CD4-positive, alpha-beta memory T cell (primary cell): ENCODE measurements at regions of chr12 and their contacts with region 1.

Region 1: DNA sequence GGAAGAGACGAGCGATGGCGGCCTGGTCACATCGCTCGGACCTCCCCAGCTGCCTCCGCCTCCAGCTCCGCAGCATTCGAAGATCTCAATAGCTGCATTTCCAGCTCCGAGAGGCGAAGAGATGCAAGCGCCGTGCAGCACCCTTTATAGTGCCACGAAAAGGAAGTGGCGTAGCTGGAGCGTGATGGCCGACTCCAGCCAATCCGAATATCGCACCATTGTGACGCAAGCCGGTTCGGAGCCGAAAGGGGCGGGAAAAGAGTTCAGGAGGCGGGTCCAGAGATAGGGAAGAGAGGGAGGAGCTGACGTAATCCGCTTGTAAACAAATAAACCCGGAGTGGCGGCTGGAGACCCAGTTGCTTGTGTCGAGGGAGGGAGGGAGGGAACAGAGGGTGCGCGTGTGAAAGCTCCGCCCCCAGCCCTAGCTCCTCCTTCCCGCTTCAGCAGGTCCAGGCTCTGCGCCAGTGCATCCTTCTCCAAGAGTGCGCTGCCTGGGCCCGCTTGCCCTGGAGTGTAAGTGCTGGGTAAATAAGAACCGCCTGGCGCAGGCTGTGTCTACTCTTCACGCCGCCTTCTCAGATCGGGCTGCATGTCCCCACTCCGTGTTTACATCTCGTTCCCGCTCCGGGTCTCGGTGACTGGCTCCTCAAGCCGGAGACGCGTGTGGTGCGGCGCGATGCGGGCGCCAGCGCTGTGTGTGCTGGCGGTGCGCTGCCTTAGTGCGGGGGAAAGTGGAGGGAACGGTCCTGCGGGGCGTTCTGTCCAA is at the start of gene BTG1:
- DNase-seq: peak; percentile 99 to 100 (median 100)
- H3K4me3 ChIP-seq: peak within 1 kb of the TSS; percentile 89 to 96
- H3K4me3 Mint-ChIP-seq: peak within 1 kb of the TSS; percentile 92 to 100 (median 100)
- H3K27ac ChIP-seq: peak within 1 kb of the TSS; percentile 86
- H3K27ac Mint-ChIP-seq: peak within 1 kb of the TSS; percentile 95 to 100 (median 100)
- H3K4me1 ChIP-seq: peaks cover 23% of the 10 kb centered on the region
- H3K4me1 Mint-ChIP-seq: peaks cover 9 to 37% (median 21%) of the 10 kb centered on the region in 4 donors
- H3K27me3 ChIP-seq: no peaks in the 10 kb centered on the region
- H3K27me3 Mint-ChIP-seq: no peaks in the 10 kb centered on the region
- total RNA-seq, gene BTG1: 431 to 469 TPM

Region 2: GRCh38 chr12:91866566-91866965 is 279.3 kb before region 1 on chr12:
- CTCF ChIA-PET with region 1: interaction called, 3 read pairs
- POLR2A ChIA-PET with region 1: interaction called, 33 read pairs
- intact Hi-C with region 1: no loop called
- DNase-seq: no peak
- H3K4me3 ChIP-seq: no peak overlapping the region
- H3K4me3 Mint-ChIP-seq: no peak overlapping the region
- H3K27ac ChIP-seq: no peak overlapping the region
- H3K27ac Mint-ChIP-seq: peak overlapping the region in 1 of 7 donors; percentile 30
- H3K4me1 ChIP-seq: peaks cover 21% of the 10 kb centered on the region
- H3K4me1 Mint-ChIP-seq: peaks cover 19 to 47% (median 33%) of the 10 kb centered on the region in 4 donors
- H3K27me3 ChIP-seq: no peaks in the 10 kb centered on the region
- H3K27me3 Mint-ChIP-seq: no peaks in the 10 kb centered on the region

Region 3: DNA sequence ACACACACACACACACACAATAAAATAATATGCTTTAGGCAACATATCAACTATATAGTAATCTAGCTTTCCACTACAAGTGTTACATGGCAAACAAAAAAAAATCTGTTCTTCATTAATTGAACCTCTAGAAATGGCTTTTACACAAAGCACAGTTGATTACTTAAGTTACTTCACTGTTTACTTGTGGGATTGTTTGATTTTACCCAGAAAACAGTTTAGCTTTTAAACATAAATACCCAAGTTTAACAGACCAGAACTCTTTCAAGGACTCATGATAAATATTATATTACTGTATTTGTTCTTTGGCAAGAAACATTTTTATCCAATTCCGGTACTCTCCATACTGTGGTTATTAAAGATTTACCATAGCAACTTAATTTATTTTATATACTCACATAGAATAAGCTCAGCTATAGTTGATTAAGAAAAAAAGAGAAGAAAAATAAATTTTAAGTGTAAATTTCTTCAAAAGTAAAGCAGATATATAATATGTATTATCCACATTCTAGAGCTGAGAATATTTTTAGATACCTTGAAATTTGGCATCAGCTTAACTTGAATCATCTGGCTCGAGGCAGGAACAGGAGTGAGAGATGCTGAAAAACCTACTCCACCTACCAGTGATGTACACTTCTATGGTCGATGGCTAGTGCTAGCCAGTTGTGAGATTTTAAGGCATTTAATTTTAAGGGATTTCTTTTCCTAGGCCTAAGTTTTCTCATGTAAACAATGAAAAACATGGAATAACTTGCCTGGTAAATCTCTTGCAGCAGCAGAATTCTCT is 126.2 kb before region 1 on chr12:
- CTCF ChIA-PET with region 1: no interaction called
- POLR2A ChIA-PET with region 1: interaction called, 12 read pairs
- intact Hi-C with region 1: no loop called
- DNase-seq: no peak
- H3K4me3 ChIP-seq: no peak overlapping the region
- H3K4me3 Mint-ChIP-seq: no peak overlapping the region
- H3K27ac ChIP-seq: no peak overlapping the region
- H3K27ac Mint-ChIP-seq: peak overlapping the region in 1 of 7 donors; percentile 74
- H3K4me1 ChIP-seq: peaks cover 14% of the 10 kb centered on the region
- H3K4me1 Mint-ChIP-seq: peaks cover 12 to 16% (median 13%) of the 10 kb centered on the region in 4 donors
- H3K27me3 ChIP-seq: no peaks in the 10 kb centered on the region
- H3K27me3 Mint-ChIP-seq: no peaks in the 10 kb centered on the region

Region 4: GRCh38 chr12:92108651-92109050 is 37.3 kb before region 1 on chr12:
- CTCF ChIA-PET with region 1: no interaction called
- POLR2A ChIA-PET with region 1: interaction called, 19 read pairs
- intact Hi-C with region 1: no loop called
- DNase-seq: no peak
- H3K4me3 ChIP-seq: no peak overlapping the region
- H3K4me3 Mint-ChIP-seq: peak overlapping the region in 1 of 8 donors; percentile 42
- H3K27ac ChIP-seq: no peak overlapping the region
- H3K27ac Mint-ChIP-seq: peak overlapping the region in 2 of 7 donors; percentile 2 to 5
- H3K4me1 ChIP-seq: peaks cover 51% of the 10 kb centered on the region
- H3K4me1 Mint-ChIP-seq: peaks cover 40 to 80% (median 60%) of the 10 kb centered on the region in 4 donors
- H3K27me3 ChIP-seq: no peaks in the 10 kb centered on the region
- H3K27me3 Mint-ChIP-seq: no peaks in the 10 kb centered on the region

Region 5: GRCh38 chr12:92363295-92364146 is 217.6 kb after region 1 on chr12:
- CTCF ChIA-PET with region 1: interaction called, 15 read pairs
- POLR2A ChIA-PET with region 1: interaction called, 188 read pairs
- intact Hi-C with region 1: loop called (anchors 1 kb)
- DNase-seq: peak; percentile 40 to 76 (median 49)
- H3K4me3 ChIP-seq: peak overlapping the region; percentile 14 to 34
- H3K4me3 Mint-ChIP-seq: peak overlapping the region; percentile 44 to 92 (median 78)
- H3K27ac ChIP-seq: peak overlapping the region; percentile 41
- H3K27ac Mint-ChIP-seq: peak overlapping the region; percentile 85 to 97 (median 94)
- H3K4me1 ChIP-seq: peaks cover 66% of the 10 kb centered on the region
- H3K4me1 Mint-ChIP-seq: peaks cover 42 to 75% (median 60%) of the 10 kb centered on the region in 4 donors
- H3K27me3 ChIP-seq: no peaks in the 10 kb centered on the region
- H3K27me3 Mint-ChIP-seq: no peaks in the 10 kb centered on the region

Region 6: DNA sequence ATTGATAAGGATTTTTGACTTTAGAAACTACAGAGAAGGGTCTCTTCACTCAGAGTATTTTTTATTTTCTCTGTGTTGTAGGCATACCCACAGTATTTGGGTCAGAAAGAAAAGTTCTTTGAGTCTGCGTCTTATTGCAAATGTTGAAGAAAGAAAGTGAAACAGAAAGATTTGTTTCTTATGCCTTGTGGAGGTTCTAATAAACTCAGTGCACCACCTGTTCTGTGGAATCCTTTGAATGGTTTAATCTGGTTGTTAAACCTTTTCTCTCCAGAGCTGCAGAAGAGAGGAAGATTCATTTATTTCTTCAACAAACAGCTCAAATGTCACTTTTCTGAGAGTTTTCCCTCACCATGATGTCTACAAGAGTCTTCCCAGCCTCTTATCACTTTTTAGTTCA is 410.2 kb after region 1 on chr12:
- CTCF ChIA-PET with region 1: no interaction called
- POLR2A ChIA-PET with region 1: interaction called, 35 read pairs
- intact Hi-C with region 1: no loop called
- DNase-seq: peak in 4 of 5 donors; percentile 22 to 34 (median 28)
- H3K4me3 ChIP-seq: peak overlapping the region; percentile 24 to 27
- H3K4me3 Mint-ChIP-seq: peak overlapping the region; percentile 31 to 79 (median 60)
- H3K27ac ChIP-seq: peak overlapping the region; percentile 30
- H3K27ac Mint-ChIP-seq: peak overlapping the region; percentile 49 to 96 (median 81)
- H3K4me1 ChIP-seq: peaks cover 50% of the 10 kb centered on the region
- H3K4me1 Mint-ChIP-seq: peaks cover 25 to 53% (median 40%) of the 10 kb centered on the region in 4 donors
- H3K27me3 ChIP-seq: no peaks in the 10 kb centered on the region
- H3K27me3 Mint-ChIP-seq: no peaks in the 10 kb centered on the region